Posterior vena cava (tissue), 2 donors: ENCODE measurements at regions of chr3 and their contacts with region 1.

Region 1: GRCh38 chr3:148466980-148467740 is 230.5 kb upstream of the AGTR1 start:
- DNase-seq: no peak

Region 2: GRCh38 chr3:148453764-148454163 is 13.4 kb before region 1 on chr3:
- intact Hi-C with region 1: loop called in 1 of 2 experiments (anchors 1 kb)
- DNase-seq: no peak

Region 3: DNA sequence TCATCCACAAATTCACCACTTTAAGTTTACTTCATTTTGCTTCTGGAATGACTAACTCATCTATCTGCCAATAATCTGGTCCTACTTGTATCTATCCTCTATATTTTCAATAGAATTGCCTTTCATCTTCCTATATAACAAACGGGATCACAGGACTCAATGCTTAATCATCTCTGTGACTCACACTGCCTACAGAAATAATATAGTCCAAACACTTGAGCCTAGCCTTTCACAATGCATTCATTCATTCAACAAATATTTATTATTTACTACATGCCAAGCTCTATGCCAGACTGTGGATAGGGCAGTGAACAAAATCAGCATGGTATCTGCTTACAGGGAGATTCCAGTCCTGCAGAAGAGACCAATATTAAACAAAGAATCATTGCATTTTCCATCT is 213.9 kb after region 1 on chr3:
- intact Hi-C with region 1: no loop called
- DNase-seq: no peak

Region 4: GRCh38 chr3:148757238-148758215 is 290.4 kb after region 1 on chr3:
- intact Hi-C with region 1: no loop called
- DNase-seq: no peak